GM13977 (cell line): ENCODE measurements at regions of chr13 and their contacts with region 1.

Region 1: DNA sequence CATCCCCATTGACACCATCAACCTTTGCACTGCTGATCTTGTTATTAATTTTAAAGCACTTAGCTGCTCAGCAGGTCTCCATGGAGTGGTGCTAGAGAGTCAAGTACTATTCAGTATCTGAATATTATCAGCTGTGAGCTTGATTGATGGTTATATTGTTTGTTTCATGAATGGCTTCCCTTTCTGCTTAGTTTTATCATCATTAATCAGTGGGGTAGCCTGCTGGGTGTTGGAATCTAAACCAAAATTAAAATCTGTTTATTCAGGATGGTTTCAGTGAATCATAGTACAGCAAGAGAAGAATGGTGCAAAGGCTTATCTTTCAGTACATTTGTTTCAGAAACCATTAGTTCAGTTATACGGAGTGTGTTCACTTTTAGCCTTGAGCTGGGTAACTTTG is 42.5 kb upstream of the SCEL start:
- DNase-seq: no peak
- CTCF ChIP-seq: peak; percentile 80

Region 2: GRCh38 chr13:77565635-77566034 is 72.7 kb after region 1 on chr13:
- in situ Hi-C with region 1: loop called (anchors 5 kb)
- DNase-seq: peak; percentile 45
- CTCF ChIP-seq: peak; percentile 69